ENCODE measurements at regions of chr1 and their contacts with region 1.

Region 1: DNA sequence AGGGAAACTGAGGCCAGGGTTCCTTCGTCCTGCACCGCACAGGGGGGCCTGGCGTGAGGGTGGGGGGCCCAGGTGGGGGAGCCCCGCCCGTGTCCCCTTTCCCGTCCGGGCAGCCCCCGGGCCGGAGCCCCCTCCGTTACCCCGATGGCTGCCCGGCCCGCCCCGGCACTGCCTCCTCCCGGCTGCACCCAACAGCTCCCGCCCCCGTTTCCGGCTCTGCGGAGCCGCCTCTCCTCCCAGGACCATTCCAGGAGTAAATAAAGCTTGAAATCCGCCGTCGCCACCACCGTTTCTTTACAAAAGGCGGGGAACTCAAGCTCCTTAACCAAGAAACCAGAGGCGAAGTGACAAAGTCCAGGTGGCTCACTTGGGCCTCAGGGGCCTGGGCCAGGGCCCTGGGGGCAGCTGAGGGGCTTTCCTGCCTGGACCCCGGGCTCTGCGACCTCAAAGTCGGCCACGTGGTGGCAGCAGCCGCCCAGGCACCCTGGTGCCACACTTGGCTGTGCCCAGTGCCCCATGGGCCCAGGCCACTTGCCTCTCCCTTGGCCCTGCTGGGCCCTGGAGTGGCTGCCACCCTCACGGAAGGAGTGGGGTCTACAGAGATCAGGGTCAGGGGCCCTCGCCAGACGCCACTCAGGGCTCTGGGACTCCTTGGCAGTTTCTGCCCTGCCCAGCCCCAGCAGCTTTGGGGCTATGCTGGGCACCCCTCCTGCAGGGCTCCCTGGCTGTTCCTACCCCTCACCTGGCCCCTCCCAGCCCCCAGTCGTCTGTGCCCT is 514 bp upstream of the FAAP20 start:
- DNase-seq: peak; percentile 87
- ATAC-seq: peak; percentile 77
- H3K4me3 Mint-ChIP-seq: peak overlapping the region; percentile 91
- H3K27ac Mint-ChIP-seq: peak overlapping the region; percentile 96
- H3K4me1 Mint-ChIP-seq: peaks cover 25% of the 10 kb centered on the region
- H3K27me3 Mint-ChIP-seq: no peaks in the 10 kb centered on the region
- CTCF ChIP-seq: peak; percentile 23

Region 2: GRCh38 chr1:2133039-2133878 is 61.8 kb before region 1 on chr1:
- CTCF ChIA-PET with region 1: interaction called, 3 read pairs
- POLR2A ChIA-PET with region 1: interaction called, 5 read pairs
- intact Hi-C with region 1: loop called (anchors 1 kb)
- DNase-seq: peak; percentile 97
- ATAC-seq: peak; percentile 90
- H3K4me3 Mint-ChIP-seq: peak overlapping the region; percentile 80
- H3K27ac Mint-ChIP-seq: peak overlapping the region; percentile 75
- H3K4me1 Mint-ChIP-seq: peaks cover 14% of the 10 kb centered on the region
- H3K27me3 Mint-ChIP-seq: no peaks in the 10 kb centered on the region
- CTCF ChIP-seq: no peak

Region 3: GRCh38 chr1:2205191-2205952 is 10.3 kb after region 1 on chr1:
- CTCF ChIA-PET with region 1: interaction called, 4 read pairs
- POLR2A ChIA-PET with region 1: interaction called, 15 read pairs
- intact Hi-C with region 1: loop called (anchors 1 kb)
- DNase-seq: peak; percentile 86
- ATAC-seq: peak; percentile 93
- H3K4me3 Mint-ChIP-seq: peak overlapping the region; percentile 72
- H3K27ac Mint-ChIP-seq: no peak overlapping the region
- H3K4me1 Mint-ChIP-seq: peaks cover 29% of the 10 kb centered on the region
- H3K27me3 Mint-ChIP-seq: no peaks in the 10 kb centered on the region
- CTCF ChIP-seq: no peak

Region 4: DNA sequence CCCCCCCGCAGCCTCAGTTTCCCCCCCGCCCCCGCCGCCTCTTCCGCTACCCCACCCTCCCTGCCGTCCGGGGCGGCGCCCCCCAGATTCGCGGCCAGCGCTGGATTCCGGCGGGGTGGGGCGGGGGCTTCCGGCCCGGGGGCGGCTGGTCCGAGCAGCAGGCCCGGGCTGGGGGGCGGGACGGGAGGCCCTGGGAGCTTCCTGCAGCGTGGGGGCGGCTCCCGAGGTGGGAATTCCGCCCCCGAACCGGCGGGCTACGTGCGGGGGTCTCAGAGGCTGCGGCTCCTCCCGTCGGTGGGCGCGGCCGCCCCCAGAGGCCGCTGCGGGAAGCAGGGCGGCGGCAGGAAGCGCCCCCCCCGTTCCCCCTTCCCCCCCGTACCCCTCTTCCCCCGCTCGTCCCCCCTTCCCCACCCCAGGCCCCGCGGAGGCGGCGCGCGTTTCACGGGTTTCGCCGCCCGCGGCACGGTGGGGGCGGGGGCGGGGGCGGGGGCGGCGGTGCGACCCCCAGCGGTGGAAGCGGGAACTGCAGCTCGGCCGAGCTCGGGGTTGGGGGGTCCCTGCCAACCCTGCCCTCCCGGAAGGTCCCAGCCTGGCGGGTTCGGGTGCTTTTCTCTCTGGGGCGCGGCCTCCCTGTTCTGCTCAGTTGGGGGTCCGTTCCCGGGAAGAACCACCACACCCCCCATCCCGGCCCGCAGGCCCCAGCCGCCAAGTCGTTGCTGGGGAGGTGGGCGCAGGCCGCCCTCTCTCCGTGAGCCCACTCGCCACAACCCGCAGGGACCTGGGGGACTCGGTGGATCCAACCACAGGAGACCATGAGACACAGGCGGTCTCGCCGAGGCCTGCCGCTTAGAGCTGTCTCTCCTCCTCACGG is 120.0 kb after region 1 on chr1:
- CTCF ChIA-PET with region 1: interaction called, 17 read pairs
- POLR2A ChIA-PET with region 1: interaction called, 24 read pairs
- intact Hi-C with region 1: loop called (anchors 1 kb)
- DNase-seq: peak; percentile 78
- ATAC-seq: peak; percentile 58
- H3K4me3 Mint-ChIP-seq: peak overlapping the region; percentile 66
- H3K27ac Mint-ChIP-seq: peak overlapping the region; percentile 18
- H3K4me1 Mint-ChIP-seq: peaks cover 37% of the 10 kb centered on the region
- H3K27me3 Mint-ChIP-seq: no peaks in the 10 kb centered on the region
- CTCF ChIP-seq: peak; percentile 83

Region 5: DNA sequence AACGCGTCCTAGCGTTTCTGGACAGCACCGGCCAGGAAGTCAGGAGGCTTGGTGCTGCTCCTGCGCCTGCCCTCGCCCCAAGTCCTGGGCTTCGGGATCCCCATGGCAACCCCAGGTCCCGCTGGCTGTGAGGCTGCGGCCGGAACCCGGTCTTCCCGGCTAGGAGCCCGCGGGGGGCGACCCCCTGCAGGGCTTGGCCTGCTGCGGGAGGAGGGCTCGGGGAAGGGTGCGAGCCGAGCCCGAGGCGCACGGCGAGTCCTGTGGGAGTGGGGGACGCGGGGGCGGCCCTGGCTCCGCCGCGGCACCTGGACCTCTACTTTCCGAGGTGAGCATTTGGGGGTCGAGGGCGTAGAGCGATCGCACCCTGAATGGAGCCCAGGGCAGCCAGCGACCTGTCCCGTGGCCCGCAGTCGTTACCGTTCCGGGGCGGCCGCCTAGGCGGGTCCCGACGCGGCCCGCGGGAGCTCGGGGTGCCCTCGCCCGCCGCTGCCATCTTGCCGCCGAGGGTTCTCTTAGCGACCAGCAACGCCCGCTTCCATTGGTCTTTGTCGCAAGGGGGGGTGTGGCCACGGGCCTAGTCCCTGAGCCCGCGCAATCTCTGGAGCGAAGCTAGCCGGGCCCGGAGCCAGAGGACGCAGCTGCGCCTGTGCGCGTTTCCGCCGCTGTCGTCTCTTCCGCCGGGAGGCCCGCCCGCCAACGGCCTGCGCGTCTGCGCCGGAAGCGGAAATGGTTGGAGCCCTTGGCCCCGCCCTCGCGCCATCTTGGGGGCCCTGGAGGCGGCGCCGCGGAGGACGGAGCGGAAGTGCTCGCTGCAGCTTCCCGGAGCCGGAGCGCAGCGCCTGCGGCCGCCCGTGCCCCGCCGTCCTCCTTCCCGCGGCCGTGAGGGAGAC is 196.2 kb after region 1 on chr1 and contains the starts of genes MORN1 and RER1:
- CTCF ChIA-PET with region 1: interaction called, 24 read pairs
- POLR2A ChIA-PET with region 1: interaction called, 39 read pairs
- intact Hi-C with region 1: loop called (anchors 1 kb)
- DNase-seq: peak; percentile 96
- ATAC-seq: peak; percentile 94
- H3K4me3 Mint-ChIP-seq: peak within 1 kb of the TSS; percentile 88
- H3K27ac Mint-ChIP-seq: peak within 1 kb of the TSS; percentile 68
- H3K4me1 Mint-ChIP-seq: peaks cover 52% of the 10 kb centered on the region
- H3K27me3 Mint-ChIP-seq: no peaks in the 10 kb centered on the region
- CTCF ChIP-seq: no peak
- total RNA-seq, gene MORN1: 15.6 and 17.8 TPM in 2 replicates
- total RNA-seq, gene RER1: 102 and 105 TPM in 2 replicates

Region 6: DNA sequence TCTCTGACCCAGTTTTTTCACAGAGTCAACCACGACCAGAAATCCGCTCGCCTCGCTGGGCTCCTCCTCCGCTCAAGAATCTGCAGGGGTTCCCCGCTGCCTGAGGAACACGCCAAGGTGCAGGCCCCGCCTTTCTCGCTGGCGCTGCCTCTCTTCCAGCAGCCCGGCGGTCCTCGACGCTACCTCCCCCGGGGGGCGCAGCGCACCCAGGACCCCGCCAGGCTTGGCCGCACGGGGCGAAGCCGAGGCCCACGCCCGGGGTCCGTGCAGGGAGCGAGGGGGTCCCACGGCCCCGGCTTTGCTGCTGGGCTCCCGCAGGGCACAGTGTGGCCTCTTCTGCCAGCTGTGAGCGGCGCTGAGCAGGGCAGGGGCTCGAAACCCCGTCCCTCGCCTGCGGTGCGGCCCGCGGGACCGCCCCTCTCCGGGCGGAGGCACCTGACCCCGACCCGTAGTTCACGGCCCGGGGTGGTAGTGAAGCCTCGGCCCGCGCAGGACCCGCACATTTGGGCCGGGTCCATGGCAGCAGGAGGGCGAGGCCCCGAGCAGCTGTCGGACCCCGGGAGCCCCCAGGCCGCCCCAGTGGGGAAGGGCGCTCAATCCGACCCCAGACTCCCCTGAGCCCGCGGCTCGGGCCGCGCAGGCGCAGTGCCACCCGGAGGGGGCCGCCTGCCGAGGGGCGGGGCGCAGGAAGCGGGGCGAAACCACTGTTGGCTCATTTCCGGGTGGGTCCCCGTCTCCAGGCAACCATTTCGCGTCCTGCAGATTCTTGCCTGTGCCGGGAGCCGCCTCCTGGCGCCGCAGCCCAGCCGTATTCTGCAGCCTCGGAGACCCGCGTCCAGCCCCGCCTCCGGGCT is 447.7 kb after region 1 on chr1:
- CTCF ChIA-PET with region 1: no interaction called
- POLR2A ChIA-PET with region 1: no interaction called
- intact Hi-C with region 1: loop called (anchors 10 kb)
- DNase-seq: peak; percentile 92
- ATAC-seq: peak; percentile 79
- H3K4me3 Mint-ChIP-seq: peak overlapping the region; percentile 80
- H3K27ac Mint-ChIP-seq: peak overlapping the region; percentile 73
- H3K4me1 Mint-ChIP-seq: peaks cover 11% of the 10 kb centered on the region
- H3K27me3 Mint-ChIP-seq: peaks cover 3% of the 10 kb centered on the region
- CTCF ChIP-seq: no peak